Activated naive CD4-positive, alpha-beta T cell treated with anti-CD3 and anti-CD28 coated beads for 36 hours (primary cell): ENCODE measurements at regions of chr19 and their contacts with region 1.

Region 1: GRCh38 chr19:49590071-49590970 is 661 bp upstream of the PRR12 start:
- DNase-seq: peak; percentile 96
- H3K4me3 Mint-ChIP-seq: peak overlapping the region; percentile 77
- H3K27ac Mint-ChIP-seq: peak overlapping the region; percentile 85
- H3K4me1 Mint-ChIP-seq: peaks cover 25% of the 10 kb centered on the region
- H3K27me3 Mint-ChIP-seq: no peaks in the 10 kb centered on the region

Region 2: DNA sequence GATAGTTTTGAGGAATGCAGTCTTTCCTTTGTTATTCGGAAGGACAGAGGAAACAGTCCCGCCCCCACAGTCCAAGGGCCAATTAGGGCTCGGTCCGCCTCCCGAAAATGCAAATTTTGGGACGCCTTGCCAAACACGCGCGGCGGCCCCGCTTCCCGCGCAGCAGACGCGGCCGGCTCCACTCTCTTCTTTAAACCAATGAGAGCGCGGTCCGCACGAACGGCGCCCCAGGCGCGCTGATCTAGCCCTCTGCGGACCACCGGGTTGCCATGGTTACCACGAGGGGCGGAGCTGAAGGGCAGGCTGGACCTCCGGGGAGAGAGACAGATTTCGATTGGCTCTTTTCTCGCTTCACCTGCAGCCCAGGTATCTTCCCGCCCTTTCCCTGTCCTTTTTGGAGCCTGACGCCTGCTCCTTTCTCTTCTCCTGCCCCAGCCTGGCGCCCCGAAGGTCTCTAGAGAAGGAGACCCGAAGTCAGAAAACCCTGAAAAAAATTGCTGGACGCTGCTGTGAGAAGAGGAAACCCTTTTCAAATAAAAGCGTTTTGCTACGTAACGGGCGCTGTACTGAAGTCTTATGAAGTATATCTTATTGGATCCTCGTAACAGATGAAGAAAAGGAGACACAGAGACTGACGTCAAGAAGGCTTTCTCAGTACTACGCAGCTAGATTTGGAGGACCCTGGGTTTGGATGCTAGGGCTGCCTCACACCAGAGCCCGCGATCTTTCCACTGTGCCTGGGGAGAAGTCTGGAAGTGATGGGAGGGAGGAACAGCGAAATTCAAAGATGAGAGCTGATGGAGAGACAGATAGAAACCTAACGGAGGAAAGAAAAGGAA is 169.1 kb before region 1 on chr19:
- CTCF ChIA-PET with region 1: no interaction called
- intact Hi-C with region 1: loop called (anchors 1 kb)
- DNase-seq: peak; percentile 60
- H3K4me3 Mint-ChIP-seq: peak overlapping the region; percentile 31
- H3K27ac Mint-ChIP-seq: no peak overlapping the region
- H3K4me1 Mint-ChIP-seq: peaks cover 33% of the 10 kb centered on the region
- H3K27me3 Mint-ChIP-seq: peaks cover 58% of the 10 kb centered on the region

Region 3: DNA sequence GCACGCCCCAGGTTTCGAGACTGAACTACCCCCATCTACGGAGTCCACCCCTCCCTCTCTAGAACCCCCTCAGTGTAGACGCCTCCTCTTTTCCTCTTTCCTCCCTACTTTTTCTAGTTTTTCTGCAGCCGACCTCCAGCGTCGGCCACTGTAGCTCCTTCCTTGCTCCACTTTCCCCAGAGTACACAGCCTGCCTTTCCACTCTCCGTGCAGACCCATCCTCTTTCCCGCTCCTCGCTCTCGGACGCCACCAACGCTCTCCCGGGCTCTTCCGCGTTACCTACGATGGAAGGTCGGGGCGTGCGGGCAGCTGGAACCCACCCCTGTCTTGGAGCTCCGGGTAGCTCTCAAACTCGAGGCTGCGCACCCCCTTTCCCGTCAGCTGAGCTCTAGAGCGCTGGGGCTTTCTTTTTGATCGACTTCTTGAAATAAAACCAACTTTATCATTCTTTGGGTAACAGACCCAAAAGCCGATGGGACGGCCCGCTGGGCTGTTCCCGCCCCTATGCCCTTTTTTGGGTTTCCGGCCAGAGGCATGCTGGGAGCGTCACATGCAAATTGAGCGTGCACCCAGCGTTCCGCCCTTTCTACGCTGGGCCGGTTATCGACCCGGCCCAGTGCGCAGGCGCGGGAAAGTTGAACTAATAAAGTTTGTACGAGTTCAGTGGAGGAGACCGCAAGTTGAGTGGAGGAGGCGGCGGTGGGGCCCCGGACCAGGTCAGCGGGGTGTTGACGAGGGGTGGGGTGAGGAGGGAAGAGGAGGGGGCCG is 75.2 kb after region 1 on chr19 and contains the starts of genes BCL2L12 and IRF3:
- CTCF ChIA-PET with region 1: no interaction called
- intact Hi-C with region 1: loop called (anchors 1 kb)
- DNase-seq: peak; percentile 100
- H3K4me3 Mint-ChIP-seq: peak within 1 kb of the TSS; percentile 98
- H3K27ac Mint-ChIP-seq: peak within 1 kb of the TSS; percentile 93
- H3K4me1 Mint-ChIP-seq: peaks cover 35% of the 10 kb centered on the region
- H3K27me3 Mint-ChIP-seq: no peaks in the 10 kb centered on the region
- total RNA-seq, gene BCL2L12: 70.5 to 75.6 TPM
- total RNA-seq, gene IRF3: 85.2 to 97.8 TPM

Region 4: DNA sequence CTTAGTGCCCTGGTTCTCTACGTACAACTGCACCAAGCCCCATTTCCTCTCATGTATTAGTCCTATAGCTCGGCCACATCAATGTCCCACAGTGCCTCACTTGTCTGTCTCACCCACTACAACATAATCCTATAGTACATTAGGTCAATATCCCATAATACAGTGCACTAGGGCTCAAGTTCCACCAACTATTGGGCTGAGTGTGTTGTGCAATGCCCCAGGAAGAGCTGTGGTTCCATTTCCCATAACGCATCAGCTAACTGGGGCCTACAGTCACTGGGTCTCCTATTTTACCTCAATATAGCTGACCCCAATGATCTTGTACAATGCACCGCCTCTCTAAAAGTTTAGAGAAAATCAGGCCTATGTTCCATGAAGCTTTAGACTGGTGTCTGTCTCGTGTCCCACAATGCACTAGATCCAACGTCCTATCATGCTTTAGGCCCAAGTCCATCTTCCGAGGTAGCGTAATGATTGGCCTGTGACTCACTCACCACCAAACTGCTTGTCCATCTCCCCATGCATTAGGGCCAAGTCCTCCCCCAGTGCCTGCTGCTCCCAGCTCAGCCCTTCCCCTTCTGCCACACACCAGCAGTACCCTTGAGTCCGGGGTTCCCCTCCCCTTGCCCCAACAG is 151.0 kb after region 1 on chr19:
- CTCF ChIA-PET with region 1: no interaction called
- intact Hi-C with region 1: no loop called
- DNase-seq: no peak
- H3K4me3 Mint-ChIP-seq: no peak overlapping the region
- H3K27ac Mint-ChIP-seq: no peak overlapping the region
- H3K4me1 Mint-ChIP-seq: peaks cover 2% of the 10 kb centered on the region
- H3K27me3 Mint-ChIP-seq: no peaks in the 10 kb centered on the region

Region 5: GRCh38 chr19:49817964-49818648 is 227.8 kb after region 1 on chr19 and contains the start of gene MED25:
- CTCF ChIA-PET with region 1: interaction called, 3 read pairs
- intact Hi-C with region 1: loop called (anchors 5 kb)
- DNase-seq: peak; percentile 87
- H3K4me3 Mint-ChIP-seq: peak within 1 kb of the TSS; percentile 92
- H3K27ac Mint-ChIP-seq: peak within 1 kb of the TSS; percentile 99
- H3K4me1 Mint-ChIP-seq: peaks cover 16% of the 10 kb centered on the region
- H3K27me3 Mint-ChIP-seq: no peaks in the 10 kb centered on the region
- total RNA-seq, gene MED25: 32.4 to 39.2 TPM

Region 6: DNA sequence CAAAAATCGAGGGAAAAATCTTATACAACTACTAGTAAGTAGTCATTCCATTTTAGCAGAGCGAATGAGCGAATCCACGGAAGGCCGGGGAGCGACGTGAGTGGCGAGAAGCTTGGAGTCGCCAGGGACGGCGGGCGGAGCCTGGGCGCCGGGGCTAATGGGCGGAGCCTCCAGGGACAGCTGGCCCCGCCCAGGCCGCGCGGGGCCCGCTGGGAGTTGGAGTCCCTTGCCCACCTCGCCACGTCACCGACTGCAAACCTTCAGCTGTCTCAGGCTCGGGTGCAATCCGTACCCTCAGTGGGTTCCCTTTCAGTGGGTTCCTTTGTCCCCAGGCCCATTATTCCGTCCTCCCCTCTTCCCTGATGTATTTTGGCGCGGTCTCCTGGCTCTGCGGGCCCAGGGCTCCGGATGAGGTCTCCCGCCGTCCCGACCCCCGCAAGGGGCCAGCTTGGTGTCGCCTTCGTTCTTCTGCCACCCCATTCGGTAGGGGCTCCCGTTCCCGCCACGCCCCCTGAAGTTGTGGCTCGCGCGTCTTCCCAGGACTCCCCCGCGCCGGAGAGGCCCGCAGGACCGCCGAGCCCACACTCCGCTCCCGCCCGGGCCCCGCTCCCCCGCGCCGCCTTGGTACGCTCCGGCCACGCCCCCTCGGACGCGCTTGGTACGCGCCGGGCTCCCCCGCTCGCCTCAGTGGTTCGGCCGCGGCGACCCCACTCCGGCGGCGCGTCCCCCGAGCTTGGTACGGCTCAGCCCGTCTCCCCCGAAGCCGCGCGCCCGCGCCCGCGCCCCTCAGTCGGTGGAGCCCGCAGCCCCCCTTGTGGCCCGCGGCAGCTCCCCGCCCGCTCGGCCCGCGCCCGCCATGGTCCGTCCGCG is 260.4 kb after region 1 on chr19 and contains the start of gene PTOV1:
- CTCF ChIA-PET with region 1: no interaction called
- intact Hi-C with region 1: loop called (anchors 5 kb)
- DNase-seq: peak; percentile 91
- H3K4me3 Mint-ChIP-seq: peak within 1 kb of the TSS; percentile 87
- H3K27ac Mint-ChIP-seq: peak within 1 kb of the TSS; percentile 95
- H3K4me1 Mint-ChIP-seq: peaks cover 42% of the 10 kb centered on the region
- H3K27me3 Mint-ChIP-seq: no peaks in the 10 kb centered on the region
- total RNA-seq, gene PTOV1: 66.0 to 68.0 TPM

Region 7: GRCh38 chr19:50383852-50384684 is 793.7 kb after region 1 on chr19 and contains the start of gene POLD1:
- CTCF ChIA-PET with region 1: no interaction called
- intact Hi-C with region 1: loop called (anchors 5 kb)
- DNase-seq: peak; percentile 99
- H3K4me3 Mint-ChIP-seq: peak within 1 kb of the TSS; percentile 98
- H3K27ac Mint-ChIP-seq: peak within 1 kb of the TSS; percentile 95
- H3K4me1 Mint-ChIP-seq: peaks cover 36% of the 10 kb centered on the region
- H3K27me3 Mint-ChIP-seq: no peaks in the 10 kb centered on the region
- total RNA-seq, gene POLD1: 221 to 224 TPM